ENCODE measurements at regions of chr1 and their contacts with region 1.

Region 1: GRCh38 chr1:92623187-92623778 is 136.6 kb upstream of the GFI1 start:
- DNase-seq: no peak
- ATAC-seq: no peak

Region 2: GRCh38 chr1:92306020-92306419 is 317.3 kb before region 1 on chr1:
- intact Hi-C with region 1: loop called (anchors 5 kb)
- DNase-seq: no peak
- ATAC-seq: no peak

Region 3: GRCh38 chr1:92439291-92439690 is 184.0 kb before region 1 on chr1:
- intact Hi-C with region 1: no loop called
- DNase-seq: no peak
- ATAC-seq: no peak